ENCODE measurements at regions of chr5 and their contacts with region 1.

Region 1: GRCh38 chr5:138352071-138352721 is at the start of gene KDM3B:
- DNase-seq: peak; percentile 99
- H3K4me3 ChIP-seq: peak within 1 kb of the TSS; percentile 81 to 92
- H3K27ac ChIP-seq: peak within 1 kb of the TSS; percentile 81 to 84
- H3K4me1 ChIP-seq: peaks cover 7 to 9% of the 10 kb centered on the region in 2 experiments; a peak in 3 of 4 replicates
- H3K27me3 ChIP-seq: no peaks in the 10 kb centered on the region
- CTCF ChIP-seq: peak; percentile 99
- EP300 ChIP-seq: no peak
- RAD21 ChIP-seq: peak; percentile 18; the same call in 1 of the 2 replicates
- polyA plus RNA-seq, gene KDM3B: 22.4 and 24.5 TPM in 2 replicates

Region 2: GRCh38 chr5:138213161-138214029 is 138.8 kb before region 1 on chr5 and contains the start of gene CDC23:
- CTCF ChIA-PET with region 1: interaction called, 10 read pairs
- POLR2A ChIA-PET with region 1: interaction called, 4 read pairs
- DNase-seq: peak; percentile 92
- H3K4me3 ChIP-seq: peak within 1 kb of the TSS; percentile 79 to 95
- H3K27ac ChIP-seq: peak within 1 kb of the TSS; percentile 56 to 64
- H3K4me1 ChIP-seq: peaks cover 5 to 12% of the 10 kb centered on the region in 2 experiments; a peak in 2 of 4 replicates
- H3K27me3 ChIP-seq: no peaks in the 10 kb centered on the region
- CTCF ChIP-seq: no peak
- EP300 ChIP-seq: no peak
- RAD21 ChIP-seq: no peak
- polyA plus RNA-seq, gene CDC23: 20.2 and 31.5 TPM in 2 replicates

Region 3: DNA sequence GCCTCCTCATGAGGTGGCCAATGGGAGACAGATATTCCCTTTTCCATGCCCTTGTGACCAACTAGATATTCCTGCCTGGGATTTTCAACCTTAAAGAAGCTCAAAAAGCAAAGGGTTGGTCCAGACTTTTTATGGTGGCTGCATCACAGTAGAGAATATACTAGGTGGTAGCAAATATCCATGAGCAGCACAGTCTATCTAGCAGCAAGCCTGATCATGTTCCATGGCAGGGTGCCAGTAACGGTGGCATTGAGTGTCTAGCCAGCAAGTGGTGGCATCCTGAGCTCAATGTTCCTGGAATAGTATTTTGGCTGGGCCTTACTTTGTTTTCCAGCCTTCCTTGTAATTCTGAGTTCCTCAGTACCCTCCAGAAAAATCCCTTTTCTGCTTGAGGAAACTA is 46.4 kb before region 1 on chr5:
- CTCF ChIA-PET with region 1: interaction called, 11 read pairs
- POLR2A ChIA-PET with region 1: no interaction called
- DNase-seq: no peak
- H3K4me3 ChIP-seq: no peak overlapping the region
- H3K27ac ChIP-seq: no peak overlapping the region
- H3K4me1 ChIP-seq: no peaks in the 10 kb centered on the region
- H3K27me3 ChIP-seq: no peaks in the 10 kb centered on the region
- CTCF ChIP-seq: no peak
- EP300 ChIP-seq: no peak
- RAD21 ChIP-seq: no peak

Region 4: GRCh38 chr5:138337685-138338410 is 14.3 kb before region 1 on chr5 and contains the start of gene FAM53C:
- CTCF ChIA-PET with region 1: interaction called, 239 read pairs
- POLR2A ChIA-PET with region 1: interaction called, 44 read pairs
- DNase-seq: peak; percentile 93
- H3K4me3 ChIP-seq: peak within 1 kb of the TSS; percentile 71 to 73
- H3K27ac ChIP-seq: peak within 1 kb of the TSS; percentile 92 to 99
- H3K4me1 ChIP-seq: peaks cover 4 to 17% of the 10 kb centered on the region in 2 experiments; a peak in 2 of 4 replicates
- H3K27me3 ChIP-seq: no peaks in the 10 kb centered on the region
- CTCF ChIP-seq: no peak
- EP300 ChIP-seq: peak in 1 of 2 experiments; percentile 63; a peak in 2 of 4 replicates
- RAD21 ChIP-seq: no peak
- polyA plus RNA-seq, gene FAM53C: 14.5 and 18.7 TPM in 2 replicates

Region 5: DNA sequence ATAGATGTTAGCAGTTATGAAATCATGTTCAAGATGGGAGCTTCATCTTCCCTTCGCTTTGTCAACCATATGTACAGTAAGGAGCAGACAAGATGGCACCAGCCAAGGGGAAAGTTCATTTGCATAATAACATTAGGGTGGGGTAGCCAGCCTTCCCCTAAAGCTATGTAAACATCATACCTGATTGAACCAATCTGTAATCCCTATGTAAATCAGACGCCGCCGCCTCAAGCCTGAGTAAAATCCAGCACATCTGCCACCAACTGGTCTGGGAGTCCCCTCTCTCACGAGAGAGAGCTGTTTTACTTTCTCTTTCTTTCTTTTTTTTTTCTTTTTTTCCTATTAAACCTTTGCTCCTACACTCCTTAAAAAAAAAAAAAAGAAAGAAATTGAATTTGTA is 55.8 kb after region 1 on chr5:
- CTCF ChIA-PET with region 1: interaction called, 22 read pairs
- POLR2A ChIA-PET with region 1: no interaction called
- DNase-seq: no peak
- H3K4me3 ChIP-seq: no peak overlapping the region
- H3K27ac ChIP-seq: no peak overlapping the region
- H3K4me1 ChIP-seq: no peaks in the 10 kb centered on the region
- H3K27me3 ChIP-seq: no peaks in the 10 kb centered on the region
- CTCF ChIP-seq: no peak
- EP300 ChIP-seq: no peak
- RAD21 ChIP-seq: no peak

Measured in SK-N-SH (cell line).